Posterior vena cava (tissue), 2 donors: ENCODE measurements at regions of chr10 and their contacts with region 1.

Region 1: DNA sequence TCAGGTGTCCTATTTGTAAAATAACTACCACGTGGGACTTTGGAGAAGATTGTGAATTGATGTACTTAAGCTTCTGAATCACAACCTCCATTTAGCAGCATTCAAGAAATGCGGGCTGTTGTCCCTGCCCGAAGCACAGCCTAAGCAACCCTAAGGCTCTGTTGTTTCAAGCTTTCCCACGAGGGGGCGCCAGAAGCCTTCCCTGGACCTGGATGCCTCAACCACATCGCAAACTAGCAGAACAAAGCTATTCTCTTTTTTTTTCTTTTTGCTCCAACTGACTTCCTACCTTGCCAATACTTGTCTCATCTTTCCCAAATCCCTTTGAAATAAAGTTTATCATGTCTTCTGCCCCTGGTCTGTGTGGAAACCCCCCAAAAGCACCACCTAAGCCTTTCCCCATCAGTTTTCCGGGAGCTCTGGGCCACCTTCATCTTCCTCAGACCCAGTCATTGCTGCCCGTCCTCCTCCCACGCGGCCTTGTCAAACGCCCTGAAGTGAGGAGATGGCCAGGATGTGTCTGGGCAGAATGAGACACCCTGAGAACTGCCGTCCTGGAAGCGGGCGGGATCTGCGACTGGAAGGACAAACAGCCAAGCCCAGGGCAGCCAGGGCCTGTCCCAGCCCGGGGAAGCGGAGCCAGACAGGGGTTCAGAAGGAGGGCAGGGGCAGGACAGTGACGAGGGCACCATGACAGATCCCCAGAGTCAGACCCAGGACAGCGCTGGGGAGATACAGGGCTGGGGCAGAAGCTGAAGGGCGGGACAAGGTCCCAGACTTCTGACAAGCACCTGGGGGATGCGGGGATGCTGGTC is 112.7 kb downstream of the SLIT1 start:
- DNase-seq: peak; percentile 94

Region 2: GRCh38 chr10:97196223-97197029 is 123.4 kb after region 1 on chr10:
- intact Hi-C with region 1: loop called in 1 of 2 experiments (anchors 5 kb)
- DNase-seq: peak; percentile 83

Region 3: GRCh38 chr10:97210543-97210961 is 137.5 kb after region 1 on chr10:
- intact Hi-C with region 1: loop called (anchors 5 kb)
- DNase-seq: no peak

Region 4: GRCh38 chr10:98028168-98028770 is 955.2 kb after region 1 on chr10:
- intact Hi-C with region 1: no loop called
- DNase-seq: no peak